ENCODE measurements at regions of chr17 and their contacts with region 1.

Region 1: DNA sequence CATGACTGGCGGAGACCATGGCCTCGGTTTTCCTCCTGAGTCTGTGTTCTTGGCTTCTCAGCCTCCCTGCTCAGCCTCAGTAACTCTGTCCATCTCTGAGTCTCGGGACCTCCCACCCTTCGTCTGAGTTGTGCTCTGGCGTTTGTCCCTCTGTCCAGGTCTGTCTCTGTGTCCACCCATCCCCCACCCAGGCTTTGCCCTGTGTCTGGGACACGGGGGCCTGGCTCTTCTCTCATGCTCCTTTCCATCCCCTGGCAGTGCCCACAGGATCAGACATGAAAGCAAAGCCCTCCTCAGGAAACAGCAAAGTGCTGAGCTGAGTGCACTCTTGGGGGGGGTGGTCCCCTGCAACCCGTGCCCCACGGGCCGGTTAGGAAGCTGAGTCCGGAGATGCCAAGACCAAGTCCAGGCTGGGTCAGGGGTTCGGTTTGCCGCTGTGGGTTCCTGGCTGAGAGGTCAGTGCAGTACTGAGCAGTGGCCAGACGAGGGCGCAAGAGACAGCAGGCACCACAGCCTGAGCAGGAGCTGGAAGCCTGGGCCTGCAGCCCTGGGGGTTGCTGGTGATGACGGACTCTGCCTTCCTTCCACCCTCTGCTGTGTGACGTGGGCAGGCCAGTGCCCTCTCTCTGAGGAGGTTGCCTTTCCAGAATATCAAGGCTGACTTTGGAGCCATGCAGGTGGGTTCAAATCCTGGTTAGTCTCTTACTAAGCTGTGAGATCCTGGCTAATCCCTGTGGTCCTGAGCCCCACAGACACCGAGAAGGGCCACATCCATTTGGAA is 2.5 kb downstream of the P2RX1 start:
- DNase-seq: peak; percentile 87

Region 2: GRCh38 chr17:3959295-3959925 is 45.7 kb after region 1 on chr17:
- CTCF ChIA-PET with region 1: no interaction called
- POLR2A ChIA-PET with region 1: no interaction called
- DNase-seq: no peak

Region 3: GRCh38 chr17:3995067-3995466 is 81.3 kb after region 1 on chr17:
- CTCF ChIA-PET with region 1: no interaction called
- POLR2A ChIA-PET with region 1: no interaction called
- DNase-seq: no peak

Region 4: DNA sequence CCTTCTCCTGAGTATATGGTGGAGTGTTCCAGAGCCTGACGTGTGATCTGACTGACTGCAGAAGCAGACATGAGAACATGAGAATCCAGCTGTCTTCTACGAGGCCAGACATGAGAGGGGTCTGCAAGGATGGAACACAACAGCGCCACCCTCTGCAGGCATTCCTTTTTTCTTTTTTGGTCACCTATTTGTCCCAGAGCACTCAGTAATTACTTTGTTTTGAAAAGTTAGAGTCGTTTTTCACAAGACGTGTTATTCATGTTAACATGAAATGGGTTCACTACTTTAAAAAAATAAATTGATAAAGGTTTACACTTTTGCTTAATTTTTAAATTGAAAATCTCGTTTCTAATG is 94.3 kb after region 1 on chr17:
- CTCF ChIA-PET with region 1: interaction called, 12 read pairs
- POLR2A ChIA-PET with region 1: no interaction called
- DNase-seq: no peak

Region 5: DNA sequence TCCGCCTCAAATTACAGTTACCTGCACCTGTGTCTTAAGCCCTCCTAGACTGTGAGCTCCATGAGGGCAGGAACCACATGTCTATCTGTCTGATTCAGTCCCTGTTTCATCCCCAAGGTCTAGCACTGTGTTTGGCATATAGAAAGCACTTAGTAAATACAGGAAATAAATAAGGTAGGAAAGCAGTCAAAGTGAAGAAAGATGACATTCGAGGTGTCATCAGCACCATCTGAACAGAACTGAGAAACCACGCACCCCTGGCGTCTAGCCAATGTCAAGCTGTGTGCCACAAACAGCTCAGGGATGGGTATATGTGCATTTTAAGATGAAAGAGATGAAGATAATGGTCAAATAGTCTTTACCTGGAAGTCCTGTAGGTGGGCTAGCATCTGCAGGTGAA is 130.1 kb after region 1 on chr17:
- CTCF ChIA-PET with region 1: no interaction called
- POLR2A ChIA-PET with region 1: no interaction called
- DNase-seq: no peak

Region 6: DNA sequence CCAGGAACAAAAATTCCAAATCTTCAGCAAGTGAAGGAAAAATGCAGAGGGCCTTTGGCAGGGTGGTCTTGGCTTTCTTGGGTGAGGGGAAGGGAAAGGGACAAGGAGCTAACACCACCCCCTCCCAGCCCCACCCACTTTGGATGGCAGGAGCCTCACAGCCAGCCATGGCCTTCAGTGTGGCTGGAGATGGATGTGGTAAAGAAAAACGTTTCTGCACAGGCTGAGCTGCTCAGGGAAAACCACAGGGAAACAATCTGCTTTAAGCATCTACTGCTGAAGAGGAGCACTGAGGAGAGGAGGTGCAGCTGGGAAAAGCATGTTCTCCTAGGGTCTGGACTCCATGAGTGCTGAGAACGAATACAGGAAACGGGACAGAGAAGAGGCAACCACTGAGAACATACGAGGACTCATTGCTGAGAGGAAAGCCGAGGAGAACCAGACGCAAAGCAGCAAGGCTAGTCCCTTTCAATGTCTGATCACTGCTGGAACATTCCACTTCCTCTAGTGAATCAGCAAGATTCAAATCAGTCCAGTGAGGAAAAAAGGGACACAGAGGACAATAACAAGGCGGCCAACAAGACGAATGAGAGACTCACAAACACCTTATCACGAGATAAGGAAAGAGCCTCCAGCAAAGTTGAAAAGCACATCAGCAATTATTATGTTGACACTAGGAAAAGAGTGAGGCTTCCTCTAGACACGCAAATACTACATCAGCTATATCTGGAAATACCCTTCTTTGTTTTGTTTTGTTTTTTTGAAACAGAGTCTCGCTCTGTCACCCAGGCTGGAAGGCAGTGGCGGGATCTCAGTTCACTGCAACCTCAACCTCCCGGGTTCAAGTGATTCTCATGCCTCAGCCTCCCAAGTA is 187.4 kb after region 1 on chr17:
- CTCF ChIA-PET with region 1: no interaction called
- POLR2A ChIA-PET with region 1: no interaction called
- DNase-seq: no peak